ENCODE measurements at regions of chr12 and their contacts with region 1.

Region 1: GRCh38 chr12:88153959-88154358 is 11.9 kb downstream of the TMTC3 start:
- DNase-seq: no peak
- H3K4me3 Mint-ChIP-seq: no peak overlapping the region
- H3K27ac Mint-ChIP-seq: no peak overlapping the region
- H3K4me1 Mint-ChIP-seq: peaks cover 11% of the 10 kb centered on the region
- H3K27me3 Mint-ChIP-seq: no peaks in the 10 kb centered on the region

Region 2: GRCh38 chr12:88052686-88053085 is 101.3 kb before region 1 on chr12:
- intact Hi-C with region 1: no loop called
- DNase-seq: no peak
- H3K4me3 Mint-ChIP-seq: no peak overlapping the region
- H3K27ac Mint-ChIP-seq: no peak overlapping the region
- H3K4me1 Mint-ChIP-seq: no peaks in the 10 kb centered on the region
- H3K27me3 Mint-ChIP-seq: no peaks in the 10 kb centered on the region

Region 3: DNA sequence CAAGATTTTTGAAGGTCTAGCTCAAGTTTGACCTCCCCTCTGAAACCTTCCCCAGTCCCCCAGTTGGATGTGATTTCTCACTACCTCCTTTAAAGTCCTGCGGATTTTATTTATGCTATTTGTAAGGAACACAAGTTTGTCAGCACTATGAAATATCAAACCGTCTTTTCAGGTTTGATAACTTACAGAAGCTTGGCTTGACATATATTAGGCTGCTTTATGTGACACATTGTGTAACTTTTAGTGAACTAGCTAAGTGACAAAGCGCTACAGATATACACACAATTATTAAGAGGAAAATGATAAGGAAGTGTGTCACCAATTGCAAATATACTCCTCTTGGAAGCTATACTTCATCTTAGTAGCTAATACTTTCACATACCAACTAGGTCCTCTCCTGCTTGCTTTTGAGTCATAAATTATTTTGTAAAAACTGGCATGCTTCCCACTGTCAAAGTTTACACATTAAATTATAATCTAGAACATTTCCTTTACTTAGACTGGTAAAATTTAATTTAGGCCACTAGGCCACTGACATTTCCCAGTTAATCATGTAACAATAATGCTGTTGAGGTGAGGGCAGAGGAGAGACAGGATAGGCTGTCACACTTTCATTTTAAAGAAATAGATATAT is 137.7 kb after region 1 on chr12:
- intact Hi-C with region 1: loop called (anchors 1 kb)
- DNase-seq: no peak
- H3K4me3 Mint-ChIP-seq: no peak overlapping the region
- H3K27ac Mint-ChIP-seq: no peak overlapping the region
- H3K4me1 Mint-ChIP-seq: peaks cover 17% of the 10 kb centered on the region
- H3K27me3 Mint-ChIP-seq: no peaks in the 10 kb centered on the region

Region 4: DNA sequence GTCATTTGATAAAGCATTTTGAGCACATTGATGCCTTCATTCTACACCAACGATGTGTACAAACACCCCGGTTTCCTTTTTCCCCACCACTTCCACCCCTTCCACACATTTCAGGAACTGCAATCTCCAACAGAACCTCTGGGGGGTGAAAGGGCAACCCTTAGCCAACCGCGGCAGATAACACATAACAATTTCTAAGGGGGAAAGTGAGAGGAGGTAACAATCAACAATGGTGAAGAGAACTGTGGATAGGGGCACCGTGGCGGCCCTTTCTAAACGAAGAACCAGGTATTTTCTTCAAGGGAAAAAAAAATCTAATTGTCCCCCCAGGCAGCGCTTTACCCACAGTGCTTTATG is 425.2 kb after region 1 on chr12:
- intact Hi-C with region 1: loop called (anchors 10 kb)
- DNase-seq: no peak
- H3K4me3 Mint-ChIP-seq: peak overlapping the region; percentile 67
- H3K27ac Mint-ChIP-seq: no peak overlapping the region
- H3K4me1 Mint-ChIP-seq: peaks cover 7% of the 10 kb centered on the region
- H3K27me3 Mint-ChIP-seq: peaks cover 59% of the 10 kb centered on the region